Posterior cingulate gyrus (tissue), 11 donors: ENCODE measurements at regions of chr5 and their contacts with region 1.

Region 1: GRCh38 chr5:424301-425110 is 18.5 kb upstream of the EXOC3 start:
- DNase-seq: peak in 2 of 10 donors; percentile 14 to 80

Region 2: GRCh38 chr5:317086-317811 is 107.3 kb before region 1 on chr5:
- intact Hi-C with region 1: loop called (anchors 5 kb)
- DNase-seq: peak in 8 of 10 donors; percentile 45 to 95 (median 64)

Region 3: GRCh38 chr5:332843-333242 is 91.7 kb before region 1 on chr5:
- intact Hi-C with region 1: no loop called
- DNase-seq: no peak